Activated naive CD4-positive, alpha-beta T cell treated with anti-CD3 and anti-CD28 coated beads for 36 hours (primary cell): ENCODE measurements at regions of chr11 and their contacts with region 1.

Region 1: GRCh38 chr11:35165423-35166368 is 26.7 kb downstream of the CD44 start:
- DNase-seq: peak; percentile 95
- H3K4me3 Mint-ChIP-seq: peak overlapping the region; percentile 65
- H3K27ac Mint-ChIP-seq: peak overlapping the region; percentile 98
- H3K4me1 Mint-ChIP-seq: peaks cover 99% of the 10 kb centered on the region
- H3K27me3 Mint-ChIP-seq: no peaks in the 10 kb centered on the region

Region 2: GRCh38 chr11:35013514-35014233 is 152.0 kb before region 1 on chr11:
- CTCF ChIA-PET with region 1: interaction called, 3 read pairs
- intact Hi-C with region 1: loop called (anchors 1 kb)
- DNase-seq: peak; percentile 71
- H3K4me3 Mint-ChIP-seq: peak overlapping the region; percentile 39
- H3K27ac Mint-ChIP-seq: peak overlapping the region; percentile 93
- H3K4me1 Mint-ChIP-seq: peaks cover 41% of the 10 kb centered on the region
- H3K27me3 Mint-ChIP-seq: peaks cover 4% of the 10 kb centered on the region

Region 3: GRCh38 chr11:35082321-35083182 is 83.1 kb before region 1 on chr11:
- CTCF ChIA-PET with region 1: interaction called, 4 read pairs
- intact Hi-C with region 1: loop called (anchors 1 kb)
- DNase-seq: peak; percentile 89
- H3K4me3 Mint-ChIP-seq: peak overlapping the region; percentile 66
- H3K27ac Mint-ChIP-seq: peak overlapping the region; percentile 90
- H3K4me1 Mint-ChIP-seq: peaks cover 91% of the 10 kb centered on the region
- H3K27me3 Mint-ChIP-seq: no peaks in the 10 kb centered on the region

Region 4: GRCh38 chr11:35177370-35177769 is 11.7 kb after region 1 on chr11:
- CTCF ChIA-PET with region 1: interaction called, 26 read pairs
- intact Hi-C with region 1: loop called (anchors 1 kb)
- DNase-seq: peak; percentile 56
- H3K4me3 Mint-ChIP-seq: no peak overlapping the region
- H3K27ac Mint-ChIP-seq: peak overlapping the region; percentile 77
- H3K4me1 Mint-ChIP-seq: peaks cover 90% of the 10 kb centered on the region
- H3K27me3 Mint-ChIP-seq: no peaks in the 10 kb centered on the region

Region 5: GRCh38 chr11:35246745-35247144 is 81.0 kb after region 1 on chr11:
- CTCF ChIA-PET with region 1: interaction called, 3 read pairs
- intact Hi-C with region 1: loop called (anchors 1 kb)
- DNase-seq: no peak
- H3K4me3 Mint-ChIP-seq: no peak overlapping the region
- H3K27ac Mint-ChIP-seq: no peak overlapping the region
- H3K4me1 Mint-ChIP-seq: peaks cover 66% of the 10 kb centered on the region
- H3K27me3 Mint-ChIP-seq: no peaks in the 10 kb centered on the region

Region 6: GRCh38 chr11:35391922-35392813 is 226.5 kb after region 1 on chr11:
- CTCF ChIA-PET with region 1: interaction called, 6 read pairs
- intact Hi-C with region 1: loop called (anchors 1 kb)
- DNase-seq: peak; percentile 93
- H3K4me3 Mint-ChIP-seq: peak overlapping the region; percentile 17
- H3K27ac Mint-ChIP-seq: no peak overlapping the region
- H3K4me1 Mint-ChIP-seq: peaks cover 39% of the 10 kb centered on the region
- H3K27me3 Mint-ChIP-seq: no peaks in the 10 kb centered on the region